CD4-positive, alpha-beta T cell (primary cell): ENCODE measurements at regions of chr7 and their contacts with region 1.

Region 1: DNA sequence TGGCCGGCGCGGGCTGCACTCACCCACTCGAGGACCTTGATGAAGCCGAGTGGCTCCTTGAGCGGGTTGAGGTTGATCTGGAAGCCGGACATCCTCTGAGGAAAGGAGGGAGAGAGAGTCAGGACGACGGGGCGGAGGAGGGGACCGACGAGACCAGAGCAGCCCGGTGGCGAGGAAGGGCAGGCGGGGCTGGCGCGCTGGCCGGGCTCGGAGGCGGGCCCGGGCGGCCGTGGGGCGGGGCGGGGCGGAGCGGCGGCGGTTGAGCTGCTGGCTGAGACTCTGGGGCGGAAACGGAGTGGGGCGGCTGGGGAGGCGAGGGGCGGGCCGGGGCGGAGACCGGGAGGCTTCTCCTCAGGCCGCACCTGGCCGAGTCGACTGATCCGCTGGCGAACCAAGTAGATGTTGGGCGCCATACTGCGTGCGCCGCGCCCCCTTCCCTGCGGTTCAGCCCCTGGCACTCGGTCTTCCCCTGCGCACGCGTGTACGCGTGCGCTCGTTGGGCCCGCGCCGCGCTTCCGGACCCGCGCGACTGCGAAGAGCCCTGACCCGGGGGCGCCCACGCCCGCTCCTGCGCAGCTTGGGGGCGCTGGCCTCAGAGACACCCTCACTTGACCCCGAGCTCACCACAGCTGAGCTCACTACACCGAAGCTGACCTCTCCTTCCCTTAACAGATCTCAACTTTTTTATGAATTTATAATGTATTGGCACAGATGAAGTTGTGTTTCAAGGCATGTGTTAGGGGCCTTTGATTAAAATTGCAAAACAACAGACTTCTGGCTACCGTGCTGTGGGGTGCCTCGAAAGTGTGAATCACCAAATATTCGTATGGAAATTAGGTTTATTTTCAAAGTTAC is at the start of gene SYPL1:
- DNase-seq: peak; percentile 89 to 98 (median 94)
- ATAC-seq: peak; percentile 84
- H3K4me3 ChIP-seq: peak within 1 kb of the TSS; percentile 73
- H3K4me3 Mint-ChIP-seq: peak within 1 kb of the TSS; percentile 94
- H3K27ac ChIP-seq: peak within 1 kb of the TSS; percentile 81 to 82
- H3K27ac Mint-ChIP-seq: peak within 1 kb of the TSS; percentile 90
- H3K4me1 ChIP-seq: peaks cover 26% of the 10 kb centered on the region
- H3K4me1 Mint-ChIP-seq: peaks cover 78% of the 10 kb centered on the region
- H3K27me3 ChIP-seq: no peaks in the 10 kb centered on the region
- H3K27me3 Mint-ChIP-seq: no peaks in the 10 kb centered on the region
- CTCF ChIP-seq: no peak
- total RNA-seq, gene SYPL1: 51.2 to 53.1 TPM

Region 2: GRCh38 chr7:105131033-105131656 is 981.2 kb before region 1 on chr7:
- CTCF ChIA-PET with region 1: no interaction called
- POLR2A ChIA-PET with region 1: no interaction called
- intact Hi-C with region 1: no loop called
- DNase-seq: no peak
- ATAC-seq: no peak
- H3K4me3 ChIP-seq: no peak overlapping the region
- H3K4me3 Mint-ChIP-seq: no peak overlapping the region
- H3K27ac ChIP-seq: no peak overlapping the region
- H3K27ac Mint-ChIP-seq: no peak overlapping the region
- H3K4me1 ChIP-seq: peaks cover 8% of the 10 kb centered on the region
- H3K4me1 Mint-ChIP-seq: peaks cover 16% of the 10 kb centered on the region
- H3K27me3 ChIP-seq: no peaks in the 10 kb centered on the region
- H3K27me3 Mint-ChIP-seq: no peaks in the 10 kb centered on the region
- CTCF ChIP-seq: no peak

Region 3: GRCh38 chr7:105346593-105347322 is 765.6 kb before region 1 on chr7:
- CTCF ChIA-PET with region 1: no interaction called
- POLR2A ChIA-PET with region 1: no interaction called
- intact Hi-C with region 1: no loop called
- DNase-seq: peak in 3 of 14 experiments; percentile 54 to 81 (median 59)
- ATAC-seq: peak; percentile 66
- H3K4me3 ChIP-seq: no peak overlapping the region
- H3K4me3 Mint-ChIP-seq: peak overlapping the region; percentile 75
- H3K27ac ChIP-seq: peak overlapping the region in 1 of 2 donors; percentile 9
- H3K27ac Mint-ChIP-seq: peak overlapping the region; percentile 79
- H3K4me1 ChIP-seq: peaks cover 70% of the 10 kb centered on the region
- H3K4me1 Mint-ChIP-seq: peaks cover 74% of the 10 kb centered on the region
- H3K27me3 ChIP-seq: no peaks in the 10 kb centered on the region
- H3K27me3 Mint-ChIP-seq: no peaks in the 10 kb centered on the region
- CTCF ChIP-seq: no peak

Region 4: GRCh38 chr7:105565190-105565589 is 547.2 kb before region 1 on chr7:
- CTCF ChIA-PET with region 1: no interaction called
- POLR2A ChIA-PET with region 1: no interaction called
- intact Hi-C with region 1: no loop called
- DNase-seq: no peak
- ATAC-seq: no peak
- H3K4me3 ChIP-seq: no peak overlapping the region
- H3K4me3 Mint-ChIP-seq: no peak overlapping the region
- H3K27ac ChIP-seq: no peak overlapping the region
- H3K27ac Mint-ChIP-seq: no peak overlapping the region
- H3K4me1 ChIP-seq: no peaks in the 10 kb centered on the region
- H3K4me1 Mint-ChIP-seq: no peaks in the 10 kb centered on the region
- H3K27me3 ChIP-seq: no peaks in the 10 kb centered on the region
- H3K27me3 Mint-ChIP-seq: no peaks in the 10 kb centered on the region
- CTCF ChIP-seq: no peak

Region 5: DNA sequence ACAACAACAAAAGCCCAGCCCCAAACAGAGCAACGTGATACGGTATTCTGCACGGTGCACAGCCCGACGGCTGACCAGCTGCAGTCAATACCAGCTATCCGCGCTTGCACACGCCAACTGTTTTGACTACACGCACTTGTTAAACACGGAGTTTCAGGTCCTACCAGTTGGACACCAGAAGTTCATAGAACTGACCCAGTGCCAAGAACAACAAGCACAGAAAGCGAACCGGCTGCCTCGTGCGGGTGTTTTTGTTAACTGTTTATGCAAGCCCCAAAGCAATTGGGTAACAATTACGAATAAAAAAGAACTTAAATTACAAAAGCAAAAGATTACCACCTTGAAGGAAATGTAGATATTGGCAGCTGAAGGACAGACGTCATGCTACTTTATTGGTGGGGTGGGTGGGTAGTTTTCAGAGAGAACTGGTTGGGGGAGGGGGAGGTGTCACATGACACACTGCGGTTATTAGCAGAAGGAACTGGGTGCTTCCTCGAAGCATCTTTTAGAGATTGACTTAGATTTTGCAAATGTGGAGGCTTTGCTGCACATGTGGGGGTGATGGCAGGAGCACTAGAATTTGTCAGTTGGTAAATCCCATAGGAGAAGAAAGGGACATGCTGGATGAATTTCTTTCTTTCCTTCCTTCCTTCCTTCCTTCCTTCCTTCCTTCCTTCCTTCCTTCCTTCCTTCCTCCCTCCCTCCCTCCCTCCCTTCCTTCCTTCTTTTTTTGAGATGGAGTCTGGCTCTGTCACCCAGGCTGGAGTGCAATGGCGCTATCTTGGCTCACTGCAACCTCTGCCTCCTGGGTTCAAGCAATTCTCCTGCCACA is 420.4 kb before region 1 on chr7:
- CTCF ChIA-PET with region 1: no interaction called
- POLR2A ChIA-PET with region 1: interaction called, 12 read pairs
- intact Hi-C with region 1: no loop called
- DNase-seq: peak; percentile 50 to 94 (median 68)
- ATAC-seq: peak; percentile 82
- H3K4me3 ChIP-seq: peak overlapping the region; percentile 92
- H3K4me3 Mint-ChIP-seq: peak overlapping the region; percentile 87
- H3K27ac ChIP-seq: peak overlapping the region; percentile 94 to 97
- H3K27ac Mint-ChIP-seq: peak overlapping the region; percentile 98
- H3K4me1 ChIP-seq: peaks cover 53% of the 10 kb centered on the region
- H3K4me1 Mint-ChIP-seq: peaks cover 62% of the 10 kb centered on the region
- H3K27me3 ChIP-seq: no peaks in the 10 kb centered on the region
- H3K27me3 Mint-ChIP-seq: no peaks in the 10 kb centered on the region
- CTCF ChIP-seq: no peak

Region 6: GRCh38 chr7:106071356-106071998 is 40.9 kb before region 1 on chr7:
- CTCF ChIA-PET with region 1: interaction called, 4 read pairs
- POLR2A ChIA-PET with region 1: interaction called, 149 read pairs
- intact Hi-C with region 1: loop called (anchors 2 kb)
- DNase-seq: peak in 13 of 14 experiments; percentile 11 to 83 (median 34)
- ATAC-seq: peak; percentile 95
- H3K4me3 ChIP-seq: peak overlapping the region; percentile 44
- H3K4me3 Mint-ChIP-seq: peak overlapping the region; percentile 54
- H3K27ac ChIP-seq: peak overlapping the region; percentile 79 to 86
- H3K27ac Mint-ChIP-seq: peak overlapping the region; percentile 95
- H3K4me1 ChIP-seq: peaks cover 44% of the 10 kb centered on the region
- H3K4me1 Mint-ChIP-seq: peaks cover 63% of the 10 kb centered on the region
- H3K27me3 ChIP-seq: no peaks in the 10 kb centered on the region
- H3K27me3 Mint-ChIP-seq: no peaks in the 10 kb centered on the region
- CTCF ChIP-seq: no peak

Region 7: GRCh38 chr7:106100863-106101629 is 11.3 kb before region 1 on chr7:
- CTCF ChIA-PET with region 1: interaction called, 8 read pairs
- POLR2A ChIA-PET with region 1: interaction called, 38 read pairs
- intact Hi-C with region 1: no loop called
- DNase-seq: no peak
- ATAC-seq: no peak
- H3K4me3 ChIP-seq: no peak overlapping the region
- H3K4me3 Mint-ChIP-seq: no peak overlapping the region
- H3K27ac ChIP-seq: no peak overlapping the region
- H3K27ac Mint-ChIP-seq: peak overlapping the region; percentile 2
- H3K4me1 ChIP-seq: peaks cover 5% of the 10 kb centered on the region
- H3K4me1 Mint-ChIP-seq: peaks cover 66% of the 10 kb centered on the region
- H3K27me3 ChIP-seq: no peaks in the 10 kb centered on the region
- H3K27me3 Mint-ChIP-seq: no peaks in the 10 kb centered on the region
- CTCF ChIP-seq: no peak

Region 8: GRCh38 chr7:106139265-106140251 is 27.2 kb after region 1 on chr7:
- CTCF ChIA-PET with region 1: no interaction called
- POLR2A ChIA-PET with region 1: no interaction called
- intact Hi-C with region 1: no loop called
- DNase-seq: no peak
- ATAC-seq: no peak
- H3K4me3 ChIP-seq: no peak overlapping the region
- H3K4me3 Mint-ChIP-seq: no peak overlapping the region
- H3K27ac ChIP-seq: no peak overlapping the region
- H3K27ac Mint-ChIP-seq: no peak overlapping the region
- H3K4me1 ChIP-seq: no peaks in the 10 kb centered on the region
- H3K4me1 Mint-ChIP-seq: no peaks in the 10 kb centered on the region
- H3K27me3 ChIP-seq: no peaks in the 10 kb centered on the region
- H3K27me3 Mint-ChIP-seq: no peaks in the 10 kb centered on the region
- CTCF ChIP-seq: no peak

Region 9: GRCh38 chr7:106153891-106154449 is 41.6 kb after region 1 on chr7:
- CTCF ChIA-PET with region 1: interaction called, 11 read pairs
- POLR2A ChIA-PET with region 1: interaction called, 14 read pairs
- intact Hi-C with region 1: no loop called
- DNase-seq: peak; percentile 62 to 85 (median 69)
- ATAC-seq: peak; percentile 98
- H3K4me3 ChIP-seq: no peak overlapping the region
- H3K4me3 Mint-ChIP-seq: no peak overlapping the region
- H3K27ac ChIP-seq: no peak overlapping the region
- H3K27ac Mint-ChIP-seq: no peak overlapping the region
- H3K4me1 ChIP-seq: peaks cover 5% of the 10 kb centered on the region
- H3K4me1 Mint-ChIP-seq: peaks cover 5% of the 10 kb centered on the region
- H3K27me3 ChIP-seq: peaks cover 0 to 6% of the 10 kb centered on the region in 2 experiments
- H3K27me3 Mint-ChIP-seq: peaks cover 28% of the 10 kb centered on the region
- CTCF ChIP-seq: peak; percentile 92